Common myeloid progenitor, CD34-positive (primary cell): ENCODE measurements at regions of chr15 and their contacts with region 1.

Region 1: GRCh38 chr15:74873036-74873755 is at the start of gene SCAMP2:
- DNase-seq: peak; percentile 95 to 98 (median 97)
- H3K4me3 ChIP-seq: peak within 1 kb of the TSS; percentile 73 to 97 (median 87)
- H3K27ac ChIP-seq: peak within 1 kb of the TSS; percentile 95 to 98
- H3K4me1 ChIP-seq: peaks cover 23 to 54% (median 51%) of the 10 kb centered on the region in 4 experiments
- H3K27me3 ChIP-seq: no peaks in the 10 kb centered on the region

Region 2: DNA sequence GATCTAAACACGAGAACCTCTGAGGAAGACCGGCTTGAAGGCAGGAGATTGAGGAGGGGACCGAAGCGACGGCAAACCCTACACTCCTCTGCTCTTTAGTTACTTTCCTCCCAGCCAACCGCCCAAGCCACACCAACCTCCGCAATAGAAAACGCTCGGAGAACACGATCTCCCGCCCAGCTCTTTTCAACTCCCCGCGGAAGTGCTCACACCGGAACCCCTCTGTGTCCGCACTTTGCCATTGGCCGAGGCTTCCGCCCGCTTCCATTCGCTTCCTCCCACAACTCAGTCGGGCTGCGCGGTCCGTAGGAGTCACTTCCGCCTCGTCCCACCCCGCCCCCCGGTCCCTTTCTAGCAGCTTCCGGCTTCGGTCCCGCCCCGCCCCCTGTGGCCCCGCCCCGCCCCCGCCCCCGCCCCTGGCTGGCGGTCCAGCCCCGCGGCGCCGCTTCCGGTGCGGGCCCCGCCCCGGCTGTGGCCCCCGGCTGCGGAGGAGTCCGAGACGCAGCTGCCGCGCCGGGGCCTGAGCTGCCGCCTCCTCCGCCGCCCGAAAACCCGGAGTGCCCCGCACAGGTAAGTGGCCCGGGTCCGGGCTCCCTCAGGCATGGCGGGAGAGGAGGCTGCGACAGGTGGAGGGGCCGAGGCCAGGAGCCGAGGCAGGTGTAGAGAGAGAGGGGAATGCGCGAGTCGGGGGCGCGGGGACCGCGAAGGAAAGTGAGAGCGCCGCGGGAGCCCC is 332.3 kb before region 1 on chr15 and contains the start of gene ARID3B:
- CTCF ChIA-PET with region 1: no interaction called
- POLR2A ChIA-PET with region 1: no interaction called
- DNase-seq: peak; percentile 94 to 96 (median 94)
- H3K4me3 ChIP-seq: peak within 1 kb of the TSS; percentile 80 to 94 (median 90)
- H3K27ac ChIP-seq: peak within 1 kb of the TSS; percentile 66 to 88
- H3K4me1 ChIP-seq: peaks cover 25 to 54% (median 47%) of the 10 kb centered on the region in 4 experiments
- H3K27me3 ChIP-seq: no peaks in the 10 kb centered on the region

Region 3: GRCh38 chr15:74842581-74843444 is 30.4 kb before region 1 on chr15 and contains the start of gene ULK3:
- CTCF ChIA-PET with region 1: interaction called, 37 read pairs
- POLR2A ChIA-PET with region 1: interaction called, 24 read pairs
- DNase-seq: peak; percentile 93 to 97 (median 96)
- H3K4me3 ChIP-seq: peak within 1 kb of the TSS; percentile 76 to 95 (median 81)
- H3K27ac ChIP-seq: peak within 1 kb of the TSS; percentile 46 to 80
- H3K4me1 ChIP-seq: peaks cover 0 to 47% (median 40%) of the 10 kb centered on the region in 4 experiments
- H3K27me3 ChIP-seq: no peaks in the 10 kb centered on the region

Region 4: DNA sequence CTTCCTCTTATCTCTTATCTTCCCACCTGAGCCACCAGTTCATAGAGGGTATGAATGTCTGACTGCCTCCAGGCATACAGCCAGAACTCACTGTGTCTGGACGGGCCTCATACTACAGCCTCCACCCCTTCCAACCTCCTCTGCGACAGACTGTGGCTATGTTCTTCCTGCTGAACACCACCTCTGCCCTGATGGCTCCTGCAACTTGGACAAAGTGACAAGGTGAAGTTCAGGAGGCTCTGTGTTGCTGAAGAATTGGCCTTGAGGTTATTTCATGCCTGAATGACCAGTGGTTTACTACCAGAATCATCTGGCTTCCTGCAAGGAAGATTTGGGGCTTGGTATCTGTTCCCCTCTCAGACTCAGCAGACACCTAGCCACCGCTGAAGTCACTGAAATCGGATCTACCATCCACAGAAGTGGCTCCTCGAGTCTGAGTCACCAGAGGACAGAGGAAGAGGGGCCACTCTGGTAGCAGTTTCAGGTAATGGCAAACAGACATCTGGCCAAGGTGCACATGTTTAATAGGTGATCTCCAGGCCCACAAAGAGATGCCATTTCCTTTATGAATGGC is 16.0 kb before region 1 on chr15:
- CTCF ChIA-PET with region 1: interaction called, 35 read pairs
- POLR2A ChIA-PET with region 1: interaction called, 13 read pairs
- DNase-seq: peak in 1 of 3 donors; percentile 43
- H3K4me3 ChIP-seq: no peak overlapping the region
- H3K27ac ChIP-seq: peak overlapping the region in 1 of 2 experiments; percentile 2
- H3K4me1 ChIP-seq: peaks cover 2 to 38% (median 36%) of the 10 kb centered on the region in 4 experiments
- H3K27me3 ChIP-seq: no peaks in the 10 kb centered on the region

Region 5: DNA sequence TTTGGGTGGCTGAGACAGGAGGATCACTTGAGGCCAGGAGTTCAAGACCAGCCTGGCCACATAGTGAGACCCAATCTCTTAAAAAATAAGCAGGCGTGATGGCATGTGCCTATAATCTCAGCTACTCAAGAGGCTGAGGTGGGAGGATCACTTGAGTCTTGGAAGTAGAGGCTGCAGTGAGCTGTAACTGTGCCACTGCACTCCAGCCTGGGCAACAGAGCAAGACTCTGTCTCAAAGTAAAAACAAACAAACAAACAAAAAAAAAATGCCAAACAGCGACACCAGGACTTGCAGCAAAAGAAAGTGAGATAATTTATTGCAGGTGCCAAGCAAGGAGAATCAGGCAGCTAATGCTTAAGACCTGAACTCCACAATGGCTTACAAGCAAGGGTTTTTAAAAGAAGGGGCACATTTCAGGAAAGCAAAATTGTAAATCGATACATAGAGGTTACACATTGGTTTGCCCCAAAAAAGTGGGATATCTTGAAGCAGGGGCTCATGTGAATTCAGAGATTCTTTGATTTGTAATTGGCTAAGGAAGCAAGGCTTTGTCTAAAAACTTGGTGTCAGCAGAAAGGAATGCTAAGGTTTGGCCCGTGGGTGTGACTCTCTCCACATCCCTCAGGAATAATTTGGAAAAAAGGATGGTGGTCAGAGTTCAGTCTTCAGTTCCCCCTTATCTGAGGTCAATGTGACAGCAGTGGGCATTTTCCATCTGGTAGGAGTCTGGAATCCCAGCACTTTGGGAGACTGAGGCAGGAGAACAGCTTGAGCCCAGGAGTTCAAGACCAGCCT is 11.4 kb after region 1 on chr15:
- CTCF ChIA-PET with region 1: interaction called, 10 read pairs
- POLR2A ChIA-PET with region 1: interaction called, 8 read pairs
- DNase-seq: no peak
- H3K4me3 ChIP-seq: no peak overlapping the region
- H3K27ac ChIP-seq: no peak overlapping the region
- H3K4me1 ChIP-seq: peaks cover 0 to 34% (median 19%) of the 10 kb centered on the region in 4 experiments
- H3K27me3 ChIP-seq: no peaks in the 10 kb centered on the region

Region 6: GRCh38 chr15:74889883-74890664 is 16.9 kb after region 1 on chr15 and contains the start of gene MPI:
- CTCF ChIA-PET with region 1: interaction called, 10 read pairs
- POLR2A ChIA-PET with region 1: interaction called, 8 read pairs
- DNase-seq: peak; percentile 77 to 87 (median 82)
- H3K4me3 ChIP-seq: peak within 1 kb of the TSS; percentile 49 to 94 (median 88)
- H3K27ac ChIP-seq: peak within 1 kb of the TSS; percentile 43 to 86
- H3K4me1 ChIP-seq: peaks cover 0 to 35% (median 22%) of the 10 kb centered on the region in 4 experiments
- H3K27me3 ChIP-seq: no peaks in the 10 kb centered on the region

Region 7: GRCh38 chr15:74897300-74897701 is 24.1 kb after region 1 on chr15:
- CTCF ChIA-PET with region 1: interaction called, 67 read pairs
- POLR2A ChIA-PET with region 1: interaction called, 23 read pairs
- DNase-seq: no peak
- H3K4me3 ChIP-seq: no peak overlapping the region
- H3K27ac ChIP-seq: peak overlapping the region in 1 of 2 experiments; percentile 16
- H3K4me1 ChIP-seq: peaks cover 5 to 25% (median 21%) of the 10 kb centered on the region in 4 experiments
- H3K27me3 ChIP-seq: no peaks in the 10 kb centered on the region

Region 8: DNA sequence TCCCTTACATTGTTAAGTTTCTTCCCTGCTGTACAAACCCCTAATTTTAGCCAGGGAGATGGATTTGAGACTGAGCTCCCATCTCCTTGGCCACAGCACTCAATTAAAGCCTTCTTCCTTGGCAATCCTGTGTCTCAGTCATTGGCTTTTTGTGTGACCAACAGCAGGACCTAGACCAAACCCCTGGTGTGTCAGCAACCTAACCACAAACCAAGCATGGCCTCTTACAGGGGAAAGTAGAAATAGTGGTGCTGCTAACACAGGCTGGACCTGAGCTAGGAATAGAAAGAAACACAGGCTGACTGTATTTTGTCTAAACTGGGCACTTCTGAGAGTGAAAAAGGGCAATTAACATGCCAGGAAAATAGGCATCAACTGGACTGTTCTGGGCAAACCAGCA is 188.1 kb after region 1 on chr15:
- CTCF ChIA-PET with region 1: no interaction called
- POLR2A ChIA-PET with region 1: no interaction called
- DNase-seq: peak; percentile 52 to 81 (median 80)
- H3K4me3 ChIP-seq: peak overlapping the region in 2 of 7 experiments; percentile 1 to 32
- H3K27ac ChIP-seq: no peak overlapping the region
- H3K4me1 ChIP-seq: peaks cover 16 to 65% (median 34%) of the 10 kb centered on the region in 4 experiments
- H3K27me3 ChIP-seq: no peaks in the 10 kb centered on the region

Region 9: GRCh38 chr15:75185271-75186029 is 312.3 kb after region 1 on chr15:
- CTCF ChIA-PET with region 1: no interaction called
- POLR2A ChIA-PET with region 1: no interaction called
- DNase-seq: no peak
- H3K4me3 ChIP-seq: no peak overlapping the region
- H3K27ac ChIP-seq: no peak overlapping the region
- H3K4me1 ChIP-seq: peaks cover 11 to 44% (median 35%) of the 10 kb centered on the region in 4 experiments
- H3K27me3 ChIP-seq: no peaks in the 10 kb centered on the region